Calu3 (cell line): ENCODE measurements at regions of chr1 and their contacts with region 1.

Region 1: GRCh38 chr1:94045465-94046056 is 75.4 kb downstream of the ABCA4 start:
- DNase-seq: peak; percentile 89
- H3K4me3 Mint-ChIP-seq: peak overlapping the region; percentile 47
- H3K27ac Mint-ChIP-seq: peak overlapping the region; percentile 83
- H3K4me1 Mint-ChIP-seq: peaks cover 15% of the 10 kb centered on the region
- H3K27me3 Mint-ChIP-seq: no peaks in the 10 kb centered on the region
- CTCF ChIP-seq: no peak

Region 2: DNA sequence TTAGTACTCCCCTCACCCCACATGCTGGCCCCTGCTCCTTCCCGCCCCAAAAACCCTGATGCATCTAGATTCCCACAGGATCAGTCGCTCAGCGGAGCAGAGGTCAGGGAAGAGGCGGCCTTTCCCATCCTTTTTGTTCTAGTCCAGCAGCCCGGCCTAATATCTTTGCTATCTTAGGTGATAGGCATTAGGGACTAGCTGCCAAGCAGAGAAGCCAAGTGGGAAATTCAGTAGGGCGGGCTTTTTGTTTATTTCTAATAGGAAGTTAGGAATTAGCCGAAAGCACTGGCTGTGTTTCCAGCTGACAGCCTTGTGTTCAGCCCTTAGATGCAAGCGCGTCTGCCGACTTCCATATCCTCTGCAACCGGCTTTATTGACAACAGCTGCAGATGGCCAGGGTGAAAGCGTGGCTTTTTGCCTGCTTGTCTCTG is 304.9 kb before region 1 on chr1:
- CTCF ChIA-PET with region 1: no interaction called
- intact Hi-C with region 1: no loop called
- DNase-seq: no peak
- H3K4me3 Mint-ChIP-seq: no peak overlapping the region
- H3K27ac Mint-ChIP-seq: no peak overlapping the region
- H3K4me1 Mint-ChIP-seq: no peaks in the 10 kb centered on the region
- H3K27me3 Mint-ChIP-seq: no peaks in the 10 kb centered on the region
- CTCF ChIP-seq: no peak

Region 3: DNA sequence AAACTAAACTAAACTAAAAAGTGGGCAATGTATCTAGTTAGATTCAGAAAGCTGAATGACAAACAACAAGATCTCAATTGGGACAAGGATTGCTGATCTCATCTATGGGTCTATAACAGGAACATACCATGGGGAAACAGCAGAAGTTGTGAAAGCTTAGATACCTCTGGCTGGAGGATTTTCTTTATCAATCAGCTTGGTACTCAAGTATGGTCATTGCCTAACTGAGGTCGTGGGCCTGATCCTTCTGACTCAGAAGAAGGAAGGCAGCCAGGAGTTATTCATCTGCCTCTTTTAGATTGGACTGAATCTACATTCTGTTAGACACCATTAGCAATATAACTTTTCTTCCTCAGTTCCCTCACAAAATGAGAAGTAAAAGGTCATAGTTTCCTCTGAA is 206.3 kb before region 1 on chr1:
- CTCF ChIA-PET with region 1: no interaction called
- intact Hi-C with region 1: no loop called
- DNase-seq: no peak
- H3K4me3 Mint-ChIP-seq: no peak overlapping the region
- H3K27ac Mint-ChIP-seq: no peak overlapping the region
- H3K4me1 Mint-ChIP-seq: peaks cover 2% of the 10 kb centered on the region
- H3K27me3 Mint-ChIP-seq: no peaks in the 10 kb centered on the region
- CTCF ChIP-seq: no peak

Region 4: DNA sequence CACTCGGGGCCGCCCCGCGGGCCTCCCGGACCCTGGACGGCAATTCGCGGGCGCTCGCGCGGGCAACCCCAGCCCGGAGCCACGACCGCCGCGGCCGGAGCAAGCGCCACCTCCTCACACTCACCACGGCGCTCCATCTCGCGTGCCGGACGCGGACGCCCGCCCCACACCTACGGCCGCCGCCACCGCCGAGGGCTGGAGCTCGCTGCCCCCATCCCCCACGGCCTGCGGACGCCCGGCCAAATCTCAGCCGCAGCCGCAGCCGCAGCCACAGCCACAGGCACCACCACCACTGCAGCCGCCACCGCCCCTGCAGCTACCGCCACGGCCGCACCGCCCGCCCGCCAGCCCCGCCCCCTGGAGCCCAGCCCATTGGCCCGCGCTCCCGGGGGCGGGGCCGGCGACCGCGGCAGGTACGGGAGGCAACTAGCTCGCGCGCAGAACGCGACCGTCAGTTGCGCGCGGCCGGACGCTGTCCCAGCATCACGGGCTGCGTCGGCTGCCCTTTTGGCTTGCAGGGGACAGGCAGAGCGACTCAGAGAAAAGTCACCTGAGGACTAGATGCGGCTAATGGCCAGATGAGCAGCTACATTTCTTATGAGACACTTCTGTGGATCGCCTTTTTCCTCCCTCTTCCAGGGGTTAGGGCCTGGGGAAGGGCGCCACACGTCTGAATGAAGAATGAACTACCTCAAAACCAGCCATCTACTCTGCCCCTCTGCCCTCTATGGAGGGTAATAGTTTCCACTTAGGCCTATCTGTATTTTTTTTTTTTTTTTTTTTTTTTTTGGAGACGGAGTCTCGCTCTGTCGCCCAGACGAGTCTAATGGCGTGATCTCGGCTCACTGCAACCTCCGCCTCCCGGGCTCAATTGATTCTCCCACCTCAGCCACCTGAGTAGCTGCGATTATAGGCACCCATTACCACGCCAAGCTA is 192.0 kb after region 1 on chr1 and contains the start of gene ARHGAP29:
- CTCF ChIA-PET with region 1: interaction called, 9 read pairs
- intact Hi-C with region 1: loop called (anchors 5 kb)
- DNase-seq: peak; percentile 95
- H3K4me3 Mint-ChIP-seq: peak within 1 kb of the TSS; percentile 83
- H3K27ac Mint-ChIP-seq: peak within 1 kb of the TSS; percentile 77
- H3K4me1 Mint-ChIP-seq: peaks cover 41% of the 10 kb centered on the region
- H3K27me3 Mint-ChIP-seq: no peaks in the 10 kb centered on the region
- CTCF ChIP-seq: no peak
- total RNA-seq, gene ARHGAP29: 57.9 and 62.6 TPM in 2 replicates